ENCODE measurements at regions of chr2 and their contacts with region 1.

Region 1: GRCh38 chr2:127410871-127411652 is 7.2 kb upstream of the PROC start:
- DNase-seq: peak; percentile 83

Region 2: DNA sequence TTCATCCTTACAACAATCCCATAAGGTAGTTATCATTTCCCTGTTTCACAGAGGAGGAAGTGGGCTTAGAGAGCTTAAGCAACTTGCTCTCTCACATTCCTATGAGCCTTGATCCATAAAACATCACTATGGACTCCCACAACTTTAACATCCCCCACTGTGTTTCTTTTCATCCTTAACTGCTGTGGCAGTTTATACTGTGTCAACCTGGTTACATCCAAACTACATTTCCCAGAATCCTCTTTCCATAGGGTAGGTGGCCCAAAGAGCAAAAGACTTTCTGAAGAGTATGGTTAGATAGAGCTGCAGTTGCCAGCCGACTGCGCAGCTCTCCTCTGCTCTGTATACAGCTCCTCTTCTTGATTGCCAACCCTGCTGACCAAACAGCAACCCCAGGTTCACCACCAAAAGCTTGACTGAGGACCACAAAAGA is 45.8 kb before region 1 on chr2:
- in situ Hi-C with region 1: loop called (anchors 5 kb)
- DNase-seq: peak; percentile 40

Region 3: GRCh38 chr2:127683757-127684156 is 272.7 kb after region 1 on chr2:
- in situ Hi-C with region 1: no loop called
- DNase-seq: no peak

Measured in Caki2 (cell line).